ENCODE measurements at regions of chr1 and their contacts with region 1.

Region 1: GRCh38 chr1:218510153-218510772 is 165.1 kb downstream of the TGFB2 start:
- DNase-seq: no peak
- ATAC-seq: no peak

Region 2: DNA sequence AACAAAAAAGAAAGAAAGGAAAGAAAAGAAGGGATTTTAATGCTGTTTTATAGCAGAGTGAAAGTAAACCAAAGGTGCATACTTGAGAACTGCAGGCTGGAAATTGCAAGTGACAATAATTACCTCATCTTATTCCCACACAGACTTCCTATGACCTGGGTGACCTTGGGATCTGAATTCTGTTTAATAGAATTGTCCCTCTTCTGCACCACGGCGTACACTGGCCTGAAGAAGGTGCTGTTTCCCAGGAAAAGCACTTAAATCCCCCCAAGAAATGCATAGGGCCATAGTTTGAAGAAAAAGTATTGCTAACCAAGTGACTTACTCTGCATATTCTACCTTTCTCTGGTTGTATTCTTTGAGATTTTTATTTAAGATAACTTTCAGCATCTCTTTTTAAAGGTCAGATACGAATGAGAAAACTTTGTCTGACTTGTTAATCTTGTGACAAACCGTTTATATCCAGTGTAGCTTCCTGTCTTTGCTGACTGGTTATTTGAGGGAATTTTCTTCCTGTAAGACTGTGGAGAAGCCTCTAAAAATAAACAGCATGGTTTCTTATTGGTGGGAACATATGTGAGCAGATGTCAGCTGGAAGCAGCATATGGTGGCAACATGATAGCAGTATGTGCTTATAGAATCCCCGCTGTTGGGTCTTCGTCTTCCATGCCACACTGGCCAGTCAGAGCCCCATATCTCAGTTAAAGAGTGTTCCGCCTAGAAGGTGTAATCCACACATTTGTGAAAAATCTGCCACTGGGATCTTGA is 148.8 kb before region 1 on chr1:
- intact Hi-C with region 1: loop called (anchors 10 kb)
- DNase-seq: no peak
- ATAC-seq: no peak

Region 3: DNA sequence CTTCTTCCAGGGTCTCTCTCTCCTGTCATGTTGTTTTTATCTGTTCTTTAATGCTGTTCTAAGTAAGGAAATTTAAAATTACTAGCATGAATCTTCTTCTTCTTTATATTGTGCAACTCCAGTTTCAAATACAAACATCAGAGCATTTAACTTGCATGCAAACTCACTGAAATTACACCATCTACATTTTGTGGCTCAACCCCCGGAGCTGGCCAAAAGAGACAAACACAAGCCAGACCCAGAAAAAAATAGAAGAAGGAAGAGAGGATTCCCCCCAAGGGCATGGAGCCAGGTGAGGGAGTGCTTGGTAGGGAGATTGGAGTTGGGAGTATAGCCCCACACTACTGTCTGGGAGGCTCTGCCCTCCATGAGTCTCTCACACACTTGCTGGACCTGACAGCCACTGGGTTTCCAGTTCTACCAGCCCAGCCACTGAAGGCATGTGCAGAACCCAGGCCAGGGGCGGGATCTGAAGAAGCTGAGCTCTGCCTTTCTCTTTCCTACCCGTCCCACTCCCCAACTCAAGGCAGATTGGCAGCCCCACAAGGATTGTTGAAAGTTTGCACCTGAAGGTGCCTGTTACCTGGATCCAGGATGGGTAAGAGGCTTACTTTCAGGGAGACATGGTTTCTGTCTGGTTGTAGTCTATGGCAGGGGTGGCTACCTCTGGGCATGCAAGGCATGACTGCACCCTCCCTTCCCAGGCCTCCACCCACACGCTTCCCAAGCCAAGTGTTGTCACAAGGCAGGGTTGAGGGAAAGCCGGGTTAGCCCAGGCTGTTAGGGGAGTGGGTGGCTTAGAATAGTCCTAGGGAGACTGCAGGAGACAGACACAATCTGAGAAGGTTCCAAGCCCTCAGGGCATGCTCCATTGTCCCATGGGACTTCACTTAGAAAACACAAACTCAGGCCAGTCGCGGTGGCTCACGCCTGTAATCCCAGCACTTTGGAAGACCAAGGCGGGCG is 132.1 kb after region 1 on chr1:
- intact Hi-C with region 1: no loop called
- DNase-seq: no peak
- ATAC-seq: no peak

Region 4: GRCh38 chr1:218674280-218674773 is 164.1 kb after region 1 on chr1:
- intact Hi-C with region 1: no loop called
- DNase-seq: peak; percentile 47
- ATAC-seq: peak; percentile 69

Region 5: DNA sequence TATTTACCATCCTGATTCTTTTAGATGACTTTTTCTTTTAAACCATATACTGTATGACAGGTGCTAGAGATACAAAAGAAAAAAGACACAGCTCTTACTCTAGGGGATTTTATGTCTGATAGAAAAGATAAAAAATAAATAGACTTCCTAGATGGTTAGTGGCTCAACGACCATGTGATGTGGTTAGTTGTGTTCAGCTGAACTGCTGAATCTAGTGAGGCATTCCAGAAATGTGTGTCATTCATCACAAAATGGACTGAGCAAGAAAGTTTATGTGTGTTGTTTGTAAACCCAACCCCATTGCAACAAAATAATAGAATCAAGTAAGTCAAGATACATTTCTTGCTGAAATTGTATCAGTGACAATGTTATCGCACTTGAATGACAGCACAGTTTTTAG is 457.6 kb after region 1 on chr1:
- intact Hi-C with region 1: no loop called
- DNase-seq: no peak
- ATAC-seq: no peak

Measured in Right ventricle myocardium superior (tissue), 1 donor.